Aorta (tissue), 5 donors: ENCODE measurements at regions of chr2 and their contacts with region 1.

Region 1: DNA sequence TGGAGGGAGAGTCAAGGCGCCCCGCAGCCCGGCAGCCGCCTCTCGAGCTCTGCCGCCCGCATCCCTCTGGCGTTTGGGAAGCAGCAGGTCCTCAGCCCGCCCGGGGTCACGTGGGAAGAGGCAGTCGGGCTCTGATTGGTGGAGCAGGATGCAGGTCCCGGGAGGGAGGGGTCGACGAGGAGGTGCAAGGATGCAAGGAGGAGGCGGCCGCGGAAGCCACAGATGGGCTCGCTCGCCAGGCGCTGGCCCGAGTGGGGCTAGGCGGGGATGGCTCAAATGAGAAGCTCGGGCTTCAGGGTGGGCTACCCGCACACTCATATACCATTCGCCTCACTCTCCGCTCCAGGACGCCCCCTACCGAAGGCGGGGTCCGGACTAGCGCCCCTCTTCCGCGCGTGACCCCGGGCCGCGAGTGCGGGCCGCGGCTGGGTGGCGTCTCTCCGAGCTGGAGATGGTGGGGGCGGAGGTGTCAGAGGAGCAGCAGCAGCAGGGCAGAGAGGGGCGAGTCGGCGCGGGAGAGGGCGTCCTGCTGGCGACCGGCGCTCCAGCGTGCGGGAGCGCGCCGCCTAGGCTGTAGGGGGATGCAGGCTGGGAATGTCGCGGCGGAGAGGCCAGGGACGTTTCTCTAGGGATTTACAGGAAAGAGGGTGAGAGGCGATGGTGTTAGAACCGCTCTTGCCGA is at the start of gene TMEFF2:
- DNase-seq: peak; percentile 59 to 87
- ATAC-seq: peak; percentile 77
- H3K4me3 ChIP-seq: peak within 1 kb of the TSS; percentile 18 to 48
- H3K27ac ChIP-seq: no peak within 1 kb of the TSS
- H3K4me1 ChIP-seq: no peaks in the 10 kb centered on the region
- H3K27me3 ChIP-seq: no peaks in the 10 kb centered on the region
- total RNA-seq, gene TMEFF2: 0.12 TPM in 1 of 2 donors, not detected in the other

Region 2: GRCh38 chr2:192208848-192209247 is 13.8 kb after region 1 on chr2:
- intact Hi-C with region 1: no loop called
- DNase-seq: no peak
- ATAC-seq: no peak
- H3K4me3 ChIP-seq: no peak overlapping the region
- H3K27ac ChIP-seq: no peak overlapping the region
- H3K4me1 ChIP-seq: no peaks in the 10 kb centered on the region
- H3K27me3 ChIP-seq: no peaks in the 10 kb centered on the region

Region 3: GRCh38 chr2:192286093-192286701 is 91.2 kb after region 1 on chr2:
- intact Hi-C with region 1: loop called in 1 of 2 experiments (anchors 10 kb)
- DNase-seq: no peak
- ATAC-seq: no peak
- H3K4me3 ChIP-seq: no peak overlapping the region
- H3K27ac ChIP-seq: no peak overlapping the region
- H3K4me1 ChIP-seq: no peaks in the 10 kb centered on the region
- H3K27me3 ChIP-seq: no peaks in the 10 kb centered on the region